Colonic mucosa (tissue), 4 donors: ENCODE measurements at regions of chr7 and their contacts with region 1.

Region 1: GRCh38 chr7:93055543-93056107 is 62.2 kb downstream of the SAMD9 start:
- DNase-seq: no peak
- H3K4me3 ChIP-seq: no peak overlapping the region
- H3K27ac ChIP-seq: no peak overlapping the region
- H3K4me1 ChIP-seq: no peaks in the 10 kb centered on the region
- H3K27me3 ChIP-seq: no peaks in the 10 kb centered on the region
- CTCF ChIP-seq: peak; percentile 86

Region 2: GRCh38 chr7:92614660-92615174 is 440.9 kb before region 1 on chr7:
- intact Hi-C with region 1: loop called (anchors 5 kb)
- DNase-seq: no peak
- H3K4me3 ChIP-seq: no peak overlapping the region
- H3K27ac ChIP-seq: no peak overlapping the region
- H3K4me1 ChIP-seq: no peaks in the 10 kb centered on the region
- H3K27me3 ChIP-seq: no peaks in the 10 kb centered on the region
- CTCF ChIP-seq: no peak

Region 3: DNA sequence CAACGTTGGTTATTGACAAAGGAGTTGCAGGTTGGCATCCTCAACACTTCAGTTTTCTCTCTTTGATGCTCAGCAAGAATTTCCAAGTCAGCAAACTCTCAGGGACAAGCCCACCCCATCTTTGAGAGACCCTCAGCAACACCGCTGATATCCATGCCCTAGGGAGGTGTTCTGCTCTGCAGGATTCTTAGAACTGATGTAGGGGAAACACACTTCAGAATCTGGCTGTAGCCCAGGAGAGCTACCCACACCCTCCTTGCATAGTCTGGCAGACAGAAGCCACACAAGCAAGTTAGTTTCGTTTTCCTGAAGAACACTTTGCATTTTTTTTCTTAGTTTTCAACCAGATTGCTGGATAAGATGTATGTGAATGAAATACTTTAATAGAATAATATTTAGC is 91.7 kb after region 1 on chr7:
- intact Hi-C with region 1: no loop called
- DNase-seq: peak; percentile 57
- H3K4me3 ChIP-seq: peak overlapping the region; percentile 19
- H3K27ac ChIP-seq: peak overlapping the region; percentile 0
- H3K4me1 ChIP-seq: no peaks in the 10 kb centered on the region
- H3K27me3 ChIP-seq: no peaks in the 10 kb centered on the region
- CTCF ChIP-seq: no peak

Region 4: DNA sequence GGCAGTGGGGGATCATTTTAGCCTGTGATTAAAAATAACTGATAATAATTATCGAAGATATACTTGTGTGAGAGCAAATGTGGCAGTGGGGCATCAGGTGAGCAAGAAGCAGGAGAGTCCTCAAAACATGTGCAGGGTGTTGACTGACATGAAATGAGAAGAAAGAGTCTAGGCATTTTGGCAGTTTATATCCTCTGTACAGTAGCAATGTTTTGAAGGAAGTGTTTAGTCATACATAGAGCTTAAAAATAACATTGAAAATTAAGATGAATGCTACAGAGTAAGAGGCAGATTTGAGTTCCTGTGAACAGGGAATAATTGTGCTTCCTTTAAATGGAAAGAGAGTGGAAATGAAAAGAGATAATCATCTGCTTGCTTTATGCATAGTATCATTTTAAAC is 223.9 kb after region 1 on chr7:
- intact Hi-C with region 1: no loop called
- DNase-seq: no peak
- H3K4me3 ChIP-seq: no peak overlapping the region
- H3K27ac ChIP-seq: no peak overlapping the region
- H3K4me1 ChIP-seq: no peaks in the 10 kb centered on the region
- H3K27me3 ChIP-seq: no peaks in the 10 kb centered on the region
- CTCF ChIP-seq: no peak